ENCODE measurements at regions of chr4 and their contacts with region 1.

Region 1: GRCh38 chr4:154344686-154345085 is 146.9 kb downstream of the DCHS2 start:
- DNase-seq: no peak
- H3K4me3 ChIP-seq: no peak overlapping the region
- H3K27ac ChIP-seq: no peak overlapping the region
- H3K4me1 ChIP-seq: no peaks in the 10 kb centered on the region
- H3K27me3 ChIP-seq: no peaks in the 10 kb centered on the region
- CTCF ChIP-seq: peak; percentile 48 to 59 (median 50)
- EP300 ChIP-seq: no peak
- POLR2A ChIP-seq: no peak
- RAD21 ChIP-seq: peak; percentile 66 to 74

Region 2: DNA sequence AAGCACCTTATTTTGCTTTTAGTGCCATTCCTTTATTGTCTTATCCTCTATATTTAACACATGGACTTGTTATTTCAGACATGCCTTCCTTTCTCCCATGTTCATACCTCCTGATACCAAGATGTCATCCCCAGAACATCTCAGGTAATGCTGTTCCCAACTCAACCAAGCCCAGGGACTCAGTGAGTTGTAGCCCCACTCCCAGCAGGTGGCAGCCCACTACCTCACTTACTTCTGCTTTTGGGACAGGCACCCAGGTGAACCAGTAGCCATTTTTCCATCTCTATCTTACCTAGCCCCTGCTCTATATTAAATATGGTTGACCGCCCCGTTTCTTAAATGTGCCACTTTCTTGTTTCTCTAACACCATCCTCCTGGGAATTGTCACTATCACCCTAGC is 52.1 kb before region 1 on chr4:
- CTCF ChIA-PET with region 1: no interaction called
- POLR2A ChIA-PET with region 1: no interaction called
- DNase-seq: no peak
- H3K4me3 ChIP-seq: no peak overlapping the region
- H3K27ac ChIP-seq: no peak overlapping the region
- H3K4me1 ChIP-seq: no peaks in the 10 kb centered on the region
- H3K27me3 ChIP-seq: no peaks in the 10 kb centered on the region
- CTCF ChIP-seq: no peak
- EP300 ChIP-seq: no peak
- POLR2A ChIP-seq: no peak
- RAD21 ChIP-seq: peak; percentile 15 to 32; a peak in 3 of 4 replicates

Region 3: GRCh38 chr4:154317201-154317999 is 27.3 kb before region 1 on chr4:
- CTCF ChIA-PET with region 1: no interaction called
- POLR2A ChIA-PET with region 1: no interaction called
- DNase-seq: no peak
- H3K4me3 ChIP-seq: no peak overlapping the region
- H3K27ac ChIP-seq: no peak overlapping the region
- H3K4me1 ChIP-seq: peaks cover 0 to 6% (median 3%) of the 10 kb centered on the region in 4 experiments; a peak in 2 of 7 replicates
- H3K27me3 ChIP-seq: no peaks in the 10 kb centered on the region
- CTCF ChIP-seq: no peak
- EP300 ChIP-seq: no peak
- POLR2A ChIP-seq: no peak
- RAD21 ChIP-seq: no peak

Region 4: DNA sequence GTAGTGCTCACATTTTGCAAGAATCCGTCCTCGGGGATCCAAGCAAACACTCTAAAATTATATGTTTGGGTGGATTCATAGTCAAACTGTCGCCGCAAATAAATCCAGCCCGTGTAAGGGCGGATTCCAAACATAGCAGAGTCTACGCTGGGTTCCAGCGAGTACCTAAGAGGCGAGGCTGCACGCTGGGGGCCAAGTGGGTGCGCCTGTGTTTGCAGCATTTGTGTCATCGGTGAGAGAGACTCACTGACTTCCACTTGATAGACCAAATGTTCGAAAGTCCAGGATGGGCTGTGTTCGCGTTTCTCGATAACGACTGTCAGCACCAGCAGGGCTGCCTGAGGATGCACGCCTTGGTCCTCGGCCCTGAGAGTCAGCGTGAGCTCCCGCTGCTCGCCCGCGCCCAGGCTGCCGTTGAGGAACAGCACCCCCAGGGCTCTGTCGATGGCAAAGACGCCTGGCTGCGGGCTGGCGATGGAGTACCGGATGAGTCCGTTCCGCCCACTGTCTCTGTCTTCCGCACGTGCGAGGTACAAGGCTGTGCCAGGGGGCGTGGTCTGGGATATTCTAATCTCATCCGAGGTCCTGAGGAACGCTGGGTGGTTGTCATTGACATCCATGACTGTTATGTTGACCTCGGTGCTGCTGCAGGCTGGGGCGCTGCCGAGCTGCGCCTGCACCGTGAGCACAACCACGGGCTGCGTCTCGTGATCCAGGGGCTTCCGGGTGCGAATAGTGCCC is 11.8 kb before region 1 on chr4:
- CTCF ChIA-PET with region 1: interaction called, 18 read pairs
- POLR2A ChIA-PET with region 1: interaction called, 4 read pairs
- DNase-seq: peak; percentile 53 to 57
- H3K4me3 ChIP-seq: peak overlapping the region; percentile 17 to 51 (median 42); a peak in 7 of 8 replicates
- H3K27ac ChIP-seq: no peak overlapping the region
- H3K4me1 ChIP-seq: no peaks in the 10 kb centered on the region; a peak in 2 of 7 replicates
- H3K27me3 ChIP-seq: peaks cover 0 to 4% (median 3%) of the 10 kb centered on the region in 4 experiments; a peak in 2 of 7 replicates
- CTCF ChIP-seq: peak; percentile 16 to 34 (median 23); a peak in 2 of 4 replicates
- EP300 ChIP-seq: no peak
- POLR2A ChIP-seq: no peak
- RAD21 ChIP-seq: peak; percentile 29 to 30; a peak in 2 of 4 replicates

Measured in H1 (cell line).